ENCODE measurements at regions of chr1 and their contacts with region 1.

Region 1: DNA sequence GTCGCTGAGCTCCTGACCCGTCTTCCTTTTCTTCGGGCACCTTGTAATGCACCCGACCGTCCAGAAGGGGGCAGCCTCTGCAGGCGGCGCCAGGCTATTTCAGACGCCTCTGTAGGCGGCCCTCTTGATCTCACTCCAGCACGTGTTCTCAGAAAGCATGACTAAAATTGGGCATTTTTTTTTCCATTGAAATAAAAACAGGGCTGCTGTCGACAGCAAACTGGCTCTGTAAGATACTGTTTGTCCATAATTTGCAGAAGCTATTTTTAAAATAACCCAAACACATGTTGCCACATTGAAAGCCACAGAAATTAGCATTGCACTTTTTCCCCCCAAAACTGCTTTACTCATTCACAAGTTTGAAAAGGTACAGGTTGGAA is 78.0 kb downstream of the STUM start:
- DNase-seq: peak; percentile 72
- H3K4me3 Mint-ChIP-seq: peak overlapping the region; percentile 54
- H3K27ac Mint-ChIP-seq: peak overlapping the region; percentile 84
- H3K4me1 Mint-ChIP-seq: peaks cover 24% of the 10 kb centered on the region
- H3K27me3 Mint-ChIP-seq: peaks cover 13% of the 10 kb centered on the region

Region 2: GRCh38 chr1:226662642-226663326 is 36.2 kb after region 1 on chr1:
- intact Hi-C with region 1: loop called (anchors 1 kb)
- DNase-seq: peak; percentile 78
- H3K4me3 Mint-ChIP-seq: peak overlapping the region; percentile 58
- H3K27ac Mint-ChIP-seq: peak overlapping the region; percentile 86
- H3K4me1 Mint-ChIP-seq: peaks cover 77% of the 10 kb centered on the region
- H3K27me3 Mint-ChIP-seq: no peaks in the 10 kb centered on the region

Region 3: DNA sequence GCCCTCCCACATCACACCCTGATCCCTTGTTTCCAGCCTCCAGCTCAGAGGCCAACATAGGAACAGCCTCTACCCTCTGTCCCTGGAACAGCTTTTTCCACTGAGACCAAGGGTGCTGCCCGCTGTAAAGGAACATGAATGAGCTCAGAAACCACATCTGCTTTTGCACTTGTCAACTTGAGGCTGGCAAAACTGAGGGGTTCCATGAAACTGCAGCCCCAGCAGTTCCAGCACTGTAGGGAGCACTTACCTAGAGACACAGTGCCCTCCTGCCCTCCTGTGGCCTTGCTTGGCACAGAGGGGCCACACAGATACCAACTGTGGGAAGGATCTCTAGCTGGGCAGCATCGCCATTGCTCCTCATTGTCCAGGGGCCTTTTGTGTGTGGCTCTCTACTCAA is 60.9 kb after region 1 on chr1:
- intact Hi-C with region 1: loop called (anchors 2 kb)
- DNase-seq: no peak
- H3K4me3 Mint-ChIP-seq: peak overlapping the region; percentile 29
- H3K27ac Mint-ChIP-seq: peak overlapping the region; percentile 83
- H3K4me1 Mint-ChIP-seq: peaks cover 97% of the 10 kb centered on the region
- H3K27me3 Mint-ChIP-seq: no peaks in the 10 kb centered on the region

Region 4: GRCh38 chr1:226778657-226779058 is 152.1 kb after region 1 on chr1:
- intact Hi-C with region 1: no loop called
- DNase-seq: no peak
- H3K4me3 Mint-ChIP-seq: no peak overlapping the region
- H3K27ac Mint-ChIP-seq: peak overlapping the region; percentile 51
- H3K4me1 Mint-ChIP-seq: no peaks in the 10 kb centered on the region
- H3K27me3 Mint-ChIP-seq: peaks cover 6% of the 10 kb centered on the region

Region 5: DNA sequence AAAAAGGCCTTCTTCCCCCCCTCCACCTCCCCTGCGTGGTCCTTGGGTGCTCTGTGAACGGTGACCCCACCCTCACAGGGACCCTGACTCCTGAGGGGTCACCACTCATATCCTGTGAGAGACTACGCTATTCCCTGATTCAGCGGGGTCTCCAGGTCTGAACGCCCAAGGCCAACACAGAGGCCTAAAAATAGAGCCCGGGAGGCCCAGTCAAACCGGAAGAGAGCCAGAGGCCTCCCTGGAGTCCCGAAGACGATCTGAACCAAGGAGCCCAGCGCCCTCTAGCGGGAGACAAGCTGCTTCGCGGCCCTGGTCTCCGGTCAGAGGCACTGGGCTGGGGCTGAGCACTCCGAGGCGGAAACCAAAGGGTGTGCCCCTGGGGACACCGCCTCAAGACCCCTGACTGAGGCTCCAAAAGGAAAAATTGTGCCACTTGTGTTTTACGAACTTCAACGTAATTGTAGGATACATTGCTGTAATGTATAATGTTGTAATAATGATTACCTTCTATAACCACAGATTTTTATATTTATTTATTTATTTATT is 201.5 kb after region 1 on chr1:
- intact Hi-C with region 1: loop called (anchors 1 kb)
- DNase-seq: peak; percentile 91
- H3K4me3 Mint-ChIP-seq: no peak overlapping the region
- H3K27ac Mint-ChIP-seq: peak overlapping the region; percentile 89
- H3K4me1 Mint-ChIP-seq: peaks cover 32% of the 10 kb centered on the region
- H3K27me3 Mint-ChIP-seq: peaks cover 5% of the 10 kb centered on the region

Region 6: DNA sequence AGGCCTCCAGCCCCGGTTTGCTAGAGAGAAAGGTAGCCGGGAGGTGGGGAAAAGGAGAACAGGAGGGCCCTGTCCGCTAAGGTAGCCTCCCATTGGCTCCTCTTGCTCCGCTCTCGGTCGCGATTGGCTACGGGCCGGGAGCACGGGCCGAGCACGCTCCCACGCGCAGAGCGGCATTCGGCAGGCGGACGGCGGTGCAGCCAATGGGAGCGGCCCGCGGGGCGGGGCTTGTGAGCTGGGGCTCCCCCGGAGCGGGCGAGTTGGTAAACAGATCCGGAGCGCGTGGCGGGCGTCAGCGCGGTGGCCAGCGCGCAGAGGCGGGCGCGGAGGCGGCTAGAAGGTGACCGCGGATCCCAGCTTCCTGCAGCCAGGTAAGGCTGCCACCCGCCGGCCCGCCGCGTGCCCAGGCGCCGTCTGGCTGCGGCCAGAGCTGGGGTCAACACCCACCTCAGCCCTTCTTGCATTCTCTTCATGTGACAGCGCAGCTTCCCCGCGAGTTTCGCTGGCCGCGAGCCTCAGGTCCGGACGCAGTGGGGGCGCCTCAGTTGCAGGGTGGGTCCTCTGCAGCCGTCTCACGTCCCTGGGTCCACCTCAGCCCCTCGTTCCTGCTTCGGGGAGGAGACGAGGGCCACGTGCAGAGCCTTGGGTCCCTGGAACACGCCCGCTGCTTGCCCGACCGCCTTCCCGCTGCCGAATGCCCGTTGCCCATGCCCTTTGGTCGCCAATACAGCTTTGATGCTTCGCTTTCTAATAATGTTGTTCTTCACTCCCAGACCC is 313.6 kb after region 1 on chr1 and contains the start of gene COQ8A:
- intact Hi-C with region 1: loop called (anchors 1 kb)
- DNase-seq: peak; percentile 100
- H3K4me3 Mint-ChIP-seq: peak within 1 kb of the TSS; percentile 89
- H3K27ac Mint-ChIP-seq: peak within 1 kb of the TSS; percentile 97
- H3K4me1 Mint-ChIP-seq: peaks cover 41% of the 10 kb centered on the region
- H3K27me3 Mint-ChIP-seq: no peaks in the 10 kb centered on the region
- total RNA-seq, gene COQ8A: 33.1 and 33.8 TPM in 2 replicates

Region 7: GRCh38 chr1:227192163-227192562 is 565.6 kb after region 1 on chr1:
- intact Hi-C with region 1: loop called (anchors 10 kb)
- DNase-seq: peak; percentile 2
- H3K4me3 Mint-ChIP-seq: no peak overlapping the region
- H3K27ac Mint-ChIP-seq: no peak overlapping the region
- H3K4me1 Mint-ChIP-seq: peaks cover 9% of the 10 kb centered on the region
- H3K27me3 Mint-ChIP-seq: peaks cover 11% of the 10 kb centered on the region

Measured in activated T-helper 1 cell treated with anti-CD3 and anti-CD28 coated beads, Interleukin-12 subunit alpha, Interleukin-12 subunit beta, Interleukin-2, Interleukin-4 antibody, amounts not matched to agents 30 ng/mL and 10 ng/mL and 1 ng/mL, durations not matched to agents 14 hours and 24 hours and 36 hours (primary cell).